A549 (cell line): ENCODE measurements at regions of chr5 and their contacts with region 1.

Region 1: DNA sequence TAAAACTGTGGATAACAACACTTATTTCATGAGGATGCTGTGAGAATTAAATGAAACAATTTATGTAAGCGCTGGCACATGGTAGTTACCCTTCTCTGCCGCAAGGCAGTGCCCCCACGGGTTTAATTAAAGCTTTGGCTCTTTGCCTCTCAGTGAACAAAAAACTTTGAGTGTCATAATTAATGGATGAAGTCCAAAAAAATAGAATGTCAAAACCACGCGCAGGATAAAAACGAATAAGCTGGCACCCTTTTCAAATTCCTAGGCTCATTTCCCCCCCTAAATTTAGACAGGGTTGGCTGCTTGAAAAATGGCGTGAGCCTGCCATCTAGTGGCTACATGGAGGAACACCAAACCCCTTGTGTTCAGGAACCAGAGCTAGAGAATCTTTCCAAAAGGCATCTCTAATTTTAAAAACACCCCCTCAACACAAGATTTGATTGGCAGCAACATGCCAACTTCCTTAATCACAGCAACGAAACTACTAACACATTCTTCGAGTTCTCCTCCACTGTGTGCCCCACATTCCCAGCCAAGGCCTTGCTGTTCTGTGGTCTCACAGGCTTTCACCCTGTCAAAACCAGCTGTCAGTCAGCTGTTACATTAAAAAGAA is 29.0 kb upstream of the CCNG1 start:
- DNase-seq: peak; percentile 50 to 55
- ATAC-seq: peak; percentile 84 to 96; a peak in 5 of 6 replicates
- H3K4me3 ChIP-seq: no peak overlapping the region
- H3K27ac ChIP-seq: no peak overlapping the region
- H3K4me1 ChIP-seq: no peaks in the 10 kb centered on the region
- CTCF ChIP-seq: peak; percentile 97
- EP300 ChIP-seq: no peak
- POLR2A ChIP-seq: no peak
- RAD21 ChIP-seq: peak; percentile 92 to 96

Region 2: DNA sequence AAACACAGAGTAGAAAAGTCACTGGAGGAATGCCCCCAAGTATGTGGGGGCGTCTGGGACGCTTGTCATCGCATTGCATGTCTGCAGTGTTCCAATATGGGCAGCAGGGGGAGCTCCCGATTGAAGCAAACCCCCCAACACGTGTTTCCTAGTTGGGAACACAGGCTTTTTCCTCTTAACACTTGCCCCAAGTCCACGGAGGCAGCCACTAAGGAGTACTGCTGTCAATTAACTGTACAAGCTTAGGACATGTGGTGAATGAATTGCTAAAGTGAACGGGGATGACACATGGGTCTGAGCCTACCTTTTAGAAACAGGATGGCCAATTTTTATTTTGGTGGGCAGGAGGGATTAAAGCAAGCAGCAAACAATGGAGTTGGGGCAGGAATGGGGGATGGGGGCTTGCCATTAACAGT is 1864.1 kb before region 1 on chr5:
- CTCF ChIA-PET with region 1: interaction called, 10 read pairs
- POLR2A ChIA-PET with region 1: no interaction called
- DNase-seq: peak; percentile 35 to 55
- ATAC-seq: peak; percentile 19 to 73; a peak in 3 of 6 replicates
- H3K4me3 ChIP-seq: no peak overlapping the region
- H3K27ac ChIP-seq: no peak overlapping the region
- H3K4me1 ChIP-seq: peaks cover 16% of the 10 kb centered on the region; the same call in 2 of the 3 replicates
- CTCF ChIP-seq: peak; percentile 57
- EP300 ChIP-seq: no peak
- POLR2A ChIP-seq: no peak
- RAD21 ChIP-seq: peak; percentile 45 to 63; a peak in 4 of 5 replicates

Region 3: DNA sequence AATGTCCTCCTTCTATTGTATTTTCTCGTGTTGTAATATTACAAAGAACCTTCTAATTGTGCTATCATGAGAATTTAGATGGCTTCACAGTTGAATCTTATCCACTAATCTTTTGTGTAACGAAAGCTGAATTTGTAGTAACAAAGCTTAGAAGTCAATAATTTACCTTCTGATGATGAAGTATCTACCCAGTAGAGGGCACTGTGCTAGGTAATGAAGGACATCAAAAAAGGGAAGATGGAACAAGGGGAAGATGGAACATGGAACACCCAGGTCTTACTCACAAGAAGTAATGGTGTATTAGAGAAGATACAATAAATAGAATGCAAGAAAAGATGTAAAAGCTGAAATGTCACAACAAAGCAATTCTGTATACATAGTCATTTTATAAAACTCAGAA is 102.0 kb before region 1 on chr5:
- CTCF ChIA-PET with region 1: interaction called, 18 read pairs
- POLR2A ChIA-PET with region 1: no interaction called
- DNase-seq: peak in 1 of 2 experiments; percentile 47
- ATAC-seq: peak in 1 of 2 experiments; percentile 63; a peak in 3 of 6 replicates
- H3K4me3 ChIP-seq: no peak overlapping the region
- H3K27ac ChIP-seq: no peak overlapping the region
- H3K4me1 ChIP-seq: no peaks in the 10 kb centered on the region
- CTCF ChIP-seq: peak; percentile 53
- EP300 ChIP-seq: no peak
- POLR2A ChIP-seq: no peak
- RAD21 ChIP-seq: peak in 1 of 2 experiments; percentile 38; a peak in 2 of 5 replicates

Region 4: DNA sequence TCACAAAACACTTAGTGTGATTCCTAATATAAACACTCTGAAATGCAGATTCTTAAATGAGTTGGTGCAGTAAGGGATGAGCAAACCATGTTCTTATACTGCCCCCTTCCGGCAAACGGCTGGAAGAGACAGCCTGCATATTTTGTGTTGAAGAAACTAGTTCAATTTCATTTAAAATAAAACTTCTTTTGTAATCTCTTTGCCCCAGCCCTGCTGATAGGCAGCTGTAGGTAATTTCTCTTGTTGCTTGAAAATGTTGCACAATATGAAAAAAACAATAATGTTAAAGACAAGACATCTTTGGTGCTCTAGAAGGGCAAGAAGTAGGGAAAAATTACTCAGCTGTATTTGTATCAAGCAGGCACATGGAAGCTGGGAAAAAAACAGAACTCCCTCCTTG is 60.7 kb before region 1 on chr5:
- CTCF ChIA-PET with region 1: interaction called, 16 read pairs
- POLR2A ChIA-PET with region 1: no interaction called
- DNase-seq: peak; percentile 43 to 70
- ATAC-seq: peak; percentile 57 to 85; a peak in 3 of 6 replicates
- H3K4me3 ChIP-seq: no peak overlapping the region
- H3K27ac ChIP-seq: no peak overlapping the region
- H3K4me1 ChIP-seq: peaks cover 8% of the 10 kb centered on the region; the same call in 2 of the 3 replicates
- CTCF ChIP-seq: peak; percentile 90
- EP300 ChIP-seq: no peak
- POLR2A ChIP-seq: no peak
- RAD21 ChIP-seq: peak; percentile 91 to 92

Region 5: DNA sequence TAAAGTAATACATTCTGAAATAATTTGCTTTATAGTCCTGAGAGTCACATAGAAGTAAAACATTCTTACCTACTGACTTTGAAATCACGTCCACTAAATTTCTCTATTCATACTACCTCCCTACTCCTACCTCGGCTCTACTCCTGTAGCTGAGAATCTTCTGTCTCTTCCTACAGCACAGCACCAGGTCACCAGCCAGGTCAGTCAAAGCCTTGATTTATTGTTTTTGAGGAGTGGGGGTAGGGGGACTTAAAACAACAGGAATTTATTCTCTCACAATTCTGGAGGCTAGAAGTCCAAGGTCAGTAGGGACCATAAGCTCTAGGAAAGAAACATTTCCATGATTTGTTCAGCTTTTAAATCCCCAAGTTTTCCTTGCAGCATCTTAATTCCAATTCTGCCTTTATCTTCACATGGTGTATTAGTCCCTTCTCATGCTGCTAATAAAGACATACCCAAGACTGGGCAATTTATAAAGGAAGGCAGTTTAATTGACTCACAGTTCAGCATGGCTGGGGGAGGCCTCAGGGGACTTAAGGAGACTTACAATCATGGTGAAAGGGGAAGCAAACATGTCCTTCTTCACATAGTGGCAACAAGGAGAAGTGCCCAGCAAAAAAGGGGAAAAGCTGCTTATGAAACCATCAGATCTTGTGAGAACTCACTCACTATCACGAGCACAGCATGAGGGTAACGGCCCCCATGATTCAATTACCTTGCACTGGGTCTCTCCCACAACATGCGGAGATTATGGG is 20.7 kb before region 1 on chr5:
- CTCF ChIA-PET with region 1: interaction called, 12 read pairs
- POLR2A ChIA-PET with region 1: no interaction called
- DNase-seq: no peak
- ATAC-seq: no peak
- H3K4me3 ChIP-seq: no peak overlapping the region
- H3K27ac ChIP-seq: no peak overlapping the region
- H3K4me1 ChIP-seq: no peaks in the 10 kb centered on the region
- CTCF ChIP-seq: no peak
- EP300 ChIP-seq: no peak
- POLR2A ChIP-seq: no peak
- RAD21 ChIP-seq: no peak